Activated CD4-positive, alpha-beta T cell treated with anti-CD3 and anti-CD28 coated beads, Interleukin-2, amount 10 ng/mL, durations not matched to agents 7 days and 5 days (primary cell): ENCODE measurements at regions of chr16 and their contacts with region 1.

Region 1: DNA sequence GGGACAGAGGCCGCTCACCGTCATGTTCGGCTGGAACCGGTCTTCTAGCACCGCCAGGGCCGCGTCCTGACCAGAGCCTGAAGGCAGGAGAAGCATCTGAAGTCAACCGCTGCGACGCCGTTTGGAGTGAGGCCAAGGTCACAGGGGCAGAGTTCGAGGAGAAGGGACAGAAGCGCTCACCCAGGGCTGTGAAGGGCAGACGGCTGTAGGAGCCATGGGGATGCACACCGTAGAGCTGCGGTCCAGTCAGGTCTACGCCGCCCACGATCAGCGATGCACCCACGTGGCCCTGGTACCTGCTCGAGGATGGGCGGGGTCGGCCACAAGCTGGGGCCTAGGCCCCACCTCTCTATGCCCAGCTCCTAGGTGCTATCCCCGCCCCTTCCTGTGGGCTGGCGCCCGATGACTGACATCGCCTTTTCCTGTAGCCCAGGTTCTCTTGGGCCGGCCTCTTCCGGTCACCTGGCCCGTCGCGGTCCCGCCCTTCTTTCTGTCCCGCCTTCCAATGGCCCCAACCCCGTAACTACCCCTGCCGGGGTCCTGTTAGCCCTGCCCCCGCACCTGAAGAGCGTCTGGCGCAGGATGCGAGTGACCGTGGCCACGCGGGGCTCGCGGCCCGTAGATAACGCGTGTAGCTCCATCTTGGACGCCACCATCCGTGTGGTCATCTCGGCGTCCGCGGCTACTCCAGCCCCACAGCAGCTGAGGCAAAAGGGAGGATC is 1.1 kb downstream of the PSMB10 start:
- DNase-seq: peak; percentile 97
- H3K4me3 Mint-ChIP-seq: peak overlapping the region; percentile 99
- H3K27ac Mint-ChIP-seq: peak overlapping the region; percentile 93
- H3K4me1 Mint-ChIP-seq: peaks cover 45% of the 10 kb centered on the region
- H3K27me3 Mint-ChIP-seq: no peaks in the 10 kb centered on the region

Region 2: DNA sequence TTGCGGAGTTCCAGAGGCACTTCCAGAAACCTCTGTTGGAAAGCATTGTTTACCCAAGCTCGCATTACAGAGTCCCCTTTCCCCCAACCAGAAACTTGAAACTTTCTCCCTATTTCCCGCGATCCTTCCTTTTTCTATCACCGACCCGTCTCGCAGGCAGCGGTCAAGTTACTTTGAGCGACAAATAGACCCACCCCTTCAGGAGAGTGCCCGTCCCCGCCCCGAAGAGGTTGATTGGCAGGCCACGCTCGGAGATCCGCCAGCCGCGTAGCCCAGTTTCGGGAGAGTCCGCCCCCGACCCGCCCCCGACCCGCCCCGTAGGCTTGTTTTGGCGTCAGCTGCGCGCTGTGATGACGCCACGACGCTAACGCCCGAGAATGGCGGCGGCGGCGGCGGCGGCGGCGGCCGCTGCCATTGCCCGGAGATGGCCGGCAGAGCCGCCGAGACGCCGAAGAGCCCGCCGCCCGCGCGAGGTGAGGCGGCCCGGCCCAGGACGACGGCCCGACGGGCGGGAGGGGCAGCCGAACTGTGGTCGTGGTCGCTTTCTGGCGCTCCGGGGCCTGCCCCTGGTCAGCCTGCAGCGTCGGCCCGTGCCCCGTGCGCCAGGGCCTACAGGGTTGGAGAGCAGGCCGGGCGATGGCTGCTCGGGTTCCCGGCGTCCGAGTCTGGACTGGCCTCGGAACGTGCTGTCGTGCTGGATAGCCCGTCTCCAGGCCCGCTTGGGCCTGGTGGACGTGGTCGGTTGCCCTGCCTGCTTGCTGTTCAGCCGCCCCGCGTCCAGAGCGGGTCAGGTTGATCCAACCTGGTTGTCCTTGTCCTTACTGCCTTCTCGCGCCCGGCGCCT is 42.4 kb before region 1 on chr16 and contains the start of gene PSKH1:
- CTCF ChIA-PET with region 1: interaction called, 10 read pairs
- POLR2A ChIA-PET with region 1: interaction called, 6 read pairs
- DNase-seq: peak; percentile 95
- H3K4me3 Mint-ChIP-seq: peak within 1 kb of the TSS; percentile 92
- H3K27ac Mint-ChIP-seq: peak within 1 kb of the TSS; percentile 99
- H3K4me1 Mint-ChIP-seq: peaks cover 29% of the 10 kb centered on the region
- H3K27me3 Mint-ChIP-seq: no peaks in the 10 kb centered on the region
- total RNA-seq, gene PSKH1: 21.3 to 21.5 TPM